ENCODE measurements at regions of chr9 and their contacts with region 1.

Region 1: GRCh38 chr9:69877854-69878514 is 57.4 kb downstream of the CFAP95 start:
- DNase-seq: peak; percentile 22
- ATAC-seq: peak; percentile 95
- H3K4me3 ChIP-seq: no peak overlapping the region
- H3K27ac ChIP-seq: no peak overlapping the region
- H3K4me1 ChIP-seq: no peaks in the 10 kb centered on the region
- H3K27me3 ChIP-seq: no peaks in the 10 kb centered on the region
- CTCF ChIP-seq: peak; percentile 39 to 68 (median 67); a peak in 5 of 6 replicates
- POLR2A ChIP-seq: no peak
- RAD21 ChIP-seq: peak; percentile 85

Region 2: DNA sequence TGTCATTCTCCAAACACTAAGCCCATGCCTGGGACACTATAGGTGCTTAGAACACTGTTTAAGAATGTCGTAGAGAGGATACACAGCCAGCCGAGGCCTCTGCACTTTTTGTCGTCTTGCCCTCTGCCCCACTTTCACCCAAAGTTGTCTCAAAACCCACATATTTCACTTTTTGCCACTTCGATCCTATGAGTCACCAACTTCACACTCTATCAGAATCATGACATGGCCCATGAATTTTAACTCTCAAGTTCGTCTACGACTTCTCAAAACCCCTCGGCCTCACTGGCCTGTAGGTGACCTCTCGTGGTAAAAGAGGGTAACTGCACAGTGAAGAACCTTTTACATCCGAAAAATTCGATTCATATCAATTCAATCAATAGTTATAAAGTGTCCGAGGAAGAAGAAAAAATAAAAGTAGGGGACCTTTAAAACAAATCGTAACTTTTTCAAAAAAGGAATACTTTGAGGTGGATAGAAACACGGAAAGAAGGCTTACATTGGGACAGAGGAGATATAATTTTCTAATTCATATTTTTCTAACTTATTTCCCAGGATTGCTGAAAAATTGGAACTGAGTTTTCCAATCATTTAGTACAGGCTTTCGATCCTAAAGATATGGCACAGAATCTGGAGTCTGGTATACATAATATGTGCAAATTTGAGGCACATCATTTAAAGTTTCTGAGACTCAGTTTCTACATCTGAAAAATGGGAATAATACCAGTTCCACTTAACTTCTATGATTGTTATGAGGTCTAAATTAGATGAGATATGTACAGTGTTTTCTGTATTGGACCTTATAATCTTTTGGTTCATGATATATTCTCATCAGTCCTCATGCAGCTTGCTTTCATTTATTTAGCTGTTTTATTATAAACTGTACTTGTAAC is 328.4 kb before region 1 on chr9:
- CTCF ChIA-PET with region 1: no interaction called
- POLR2A ChIA-PET with region 1: no interaction called
- RAD21 ChIA-PET with region 1: no interaction called
- intact Hi-C with region 1: loop called (anchors 5 kb)
- DNase-seq: peak; percentile 38
- ATAC-seq: peak; percentile 58
- H3K4me3 ChIP-seq: no peak overlapping the region
- H3K27ac ChIP-seq: no peak overlapping the region
- H3K4me1 ChIP-seq: no peaks in the 10 kb centered on the region
- H3K27me3 ChIP-seq: peaks cover 37% of the 10 kb centered on the region; the same call in 1 of the 2 replicates
- CTCF ChIP-seq: peak; percentile 67 to 89 (median 83); a peak in 5 of 6 replicates
- POLR2A ChIP-seq: no peak
- RAD21 ChIP-seq: peak; percentile 76

Region 3: DNA sequence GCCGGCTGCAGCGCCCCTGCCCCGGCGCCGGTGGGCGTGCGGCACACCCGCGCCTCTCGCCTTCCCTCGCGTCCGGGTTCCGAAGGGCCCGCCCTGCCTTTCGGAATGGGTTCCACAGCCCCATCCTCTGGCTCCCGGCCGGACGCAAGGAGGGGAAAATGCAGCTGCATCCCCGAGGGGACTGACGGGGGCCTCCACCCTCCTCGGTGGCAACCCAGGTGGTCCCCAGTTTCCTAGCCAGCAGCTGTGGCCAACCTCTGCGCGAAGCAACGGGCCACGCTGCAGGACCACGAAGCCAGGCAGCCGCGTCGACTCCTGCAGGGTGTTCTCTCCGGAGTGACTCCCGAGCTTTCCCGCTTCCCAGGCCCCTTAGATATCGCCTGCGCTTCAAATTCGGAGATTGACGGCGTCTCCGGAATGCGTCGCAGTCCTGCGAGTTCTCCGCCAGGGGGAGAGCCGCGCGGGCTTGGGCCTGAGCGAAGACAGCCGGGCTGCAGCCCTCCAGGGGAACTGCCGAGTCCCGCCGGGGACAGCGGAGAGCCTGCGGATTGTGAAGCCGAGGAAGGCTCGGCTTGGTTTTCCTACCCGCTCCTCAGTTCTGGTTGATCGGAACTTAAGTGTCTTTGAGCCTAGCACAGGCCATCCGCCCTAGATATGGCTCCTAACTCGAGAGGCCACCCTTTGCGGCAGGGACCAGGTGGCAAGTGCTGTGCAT is 205.2 kb before region 1 on chr9:
- CTCF ChIA-PET with region 1: no interaction called
- POLR2A ChIA-PET with region 1: no interaction called
- RAD21 ChIA-PET with region 1: interaction called in 1 of 2 experiments, 3 read pairs
- intact Hi-C with region 1: loop called (anchors 1 kb)
- DNase-seq: peak; percentile 77
- ATAC-seq: peak; percentile 93
- H3K4me3 ChIP-seq: peak overlapping the region; percentile 47 to 55
- H3K27ac ChIP-seq: peak overlapping the region; percentile 1; the same call in 1 of the 2 replicates
- H3K4me1 ChIP-seq: peaks cover 3 to 14% of the 10 kb centered on the region in 2 experiments; a peak in 3 of 4 replicates
- H3K27me3 ChIP-seq: peaks cover 6% of the 10 kb centered on the region; the same call in 1 of the 2 replicates
- CTCF ChIP-seq: peak; percentile 67 to 85 (median 76)
- POLR2A ChIP-seq: no peak
- RAD21 ChIP-seq: peak; percentile 63

Region 4: GRCh38 chr9:69809304-69809863 is 68.6 kb before region 1 on chr9:
- CTCF ChIA-PET with region 1: no interaction called
- POLR2A ChIA-PET with region 1: no interaction called
- RAD21 ChIA-PET with region 1: no interaction called
- intact Hi-C with region 1: loop called (anchors 5 kb)
- DNase-seq: peak; percentile 7
- ATAC-seq: peak; percentile 78
- H3K4me3 ChIP-seq: no peak overlapping the region
- H3K27ac ChIP-seq: no peak overlapping the region
- H3K4me1 ChIP-seq: no peaks in the 10 kb centered on the region
- H3K27me3 ChIP-seq: no peaks in the 10 kb centered on the region
- CTCF ChIP-seq: peak; percentile 41 to 63 (median 42); a peak in 5 of 6 replicates
- POLR2A ChIP-seq: no peak
- RAD21 ChIP-seq: peak; percentile 42

Measured in HCT116 (cell line).